ENCODE measurements at regions of chr16 and their contacts with region 1.

Region 1: DNA sequence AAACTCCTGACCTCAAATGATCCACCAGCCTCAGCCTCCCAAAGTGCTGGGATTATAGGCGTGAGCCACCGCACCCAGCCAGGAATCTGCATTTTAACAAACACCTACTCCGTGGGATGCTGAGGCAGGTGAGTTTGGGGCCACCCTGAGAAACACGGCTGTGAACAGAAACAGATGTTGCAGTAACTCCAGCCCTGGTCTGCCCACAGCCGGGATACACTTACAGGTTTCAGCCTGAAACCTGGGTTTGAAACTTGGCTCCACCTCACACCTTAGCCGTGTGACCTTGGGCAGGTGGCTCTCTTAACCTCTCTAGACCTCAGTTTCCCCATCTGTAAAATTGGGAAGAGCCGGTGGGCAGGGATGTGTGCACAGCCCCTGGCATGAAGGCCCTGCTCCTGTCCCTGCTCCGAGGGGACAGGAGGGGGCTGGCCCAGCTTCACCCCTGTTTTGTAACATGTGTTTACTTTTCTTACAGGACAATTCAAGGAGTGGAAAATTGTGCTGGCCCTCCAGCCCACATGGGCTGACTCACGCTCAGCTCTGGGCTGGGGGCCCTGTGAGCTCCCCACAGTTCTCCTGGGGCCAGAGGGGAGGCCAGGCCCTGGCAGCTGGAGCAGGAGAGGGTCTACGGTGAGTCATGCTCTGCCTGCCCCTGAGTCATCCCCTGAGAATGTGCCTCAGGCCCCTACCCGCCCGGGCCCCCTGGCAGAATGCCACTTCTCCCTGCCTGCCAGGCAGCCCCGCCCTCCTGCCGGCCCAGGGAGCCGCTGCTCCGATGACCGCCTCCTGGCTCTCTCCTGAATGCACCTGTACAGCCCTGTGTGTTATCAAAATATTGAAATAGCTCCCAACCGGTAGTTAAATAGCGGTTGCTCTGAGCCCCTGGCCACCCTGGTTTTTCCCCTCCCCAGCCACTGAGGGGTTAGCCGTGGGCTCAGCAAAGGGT is 7.7 kb upstream of the PPL start:
- DNase-seq: peak; percentile 97 to 98 (median 98)
- H3K4me3 ChIP-seq: no peak overlapping the region
- H3K27ac ChIP-seq: peak overlapping the region; percentile 67 to 82
- H3K4me1 ChIP-seq: peaks cover 29% of the 10 kb centered on the region
- H3K27me3 ChIP-seq: no peaks in the 10 kb centered on the region
- CTCF ChIP-seq: no peak
- EP300 ChIP-seq: peak; percentile 50
- POLR2A ChIP-seq: no peak

Region 2: DNA sequence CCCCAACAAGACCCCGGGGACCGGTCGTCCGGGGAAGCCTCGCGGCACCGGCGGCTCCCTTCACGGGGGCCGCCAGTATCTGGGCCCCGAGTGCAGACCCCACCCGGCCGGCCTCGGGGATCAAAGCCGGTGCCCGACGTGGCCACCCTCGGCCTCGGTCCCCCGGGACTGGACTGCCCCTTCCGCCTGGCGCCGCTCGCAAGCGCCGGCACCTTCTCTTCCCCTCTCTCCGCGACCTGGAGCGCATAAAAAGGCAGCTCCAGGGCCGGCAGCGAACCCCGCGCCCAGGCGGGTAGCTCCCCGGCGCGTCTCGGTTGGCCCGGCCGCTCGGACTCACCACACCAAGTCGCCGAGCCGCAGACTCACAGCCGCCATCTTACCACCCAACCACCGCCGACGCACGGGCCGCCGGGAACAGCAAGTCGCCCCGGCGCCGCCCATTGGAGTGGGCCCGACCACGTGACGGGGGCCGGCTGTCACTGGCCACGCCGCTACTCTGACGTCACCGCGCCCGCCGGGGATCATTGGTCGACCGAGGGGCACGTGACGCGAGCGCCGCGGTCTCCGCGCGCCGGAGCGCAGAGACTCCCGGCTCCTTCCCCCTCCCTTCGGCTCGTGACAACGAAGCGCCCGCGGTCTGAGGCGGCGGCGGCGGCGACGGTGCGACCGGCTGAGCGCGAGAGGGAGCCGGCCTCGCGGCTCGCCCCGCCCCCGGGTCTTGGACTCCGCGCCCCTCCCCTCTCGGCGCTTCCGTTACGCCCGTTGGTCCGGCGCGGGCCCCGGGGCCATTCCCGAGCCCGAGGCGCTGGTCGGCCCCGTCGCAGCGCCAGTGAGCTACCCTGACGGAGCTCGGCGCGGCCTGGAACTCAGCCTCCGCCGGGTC is 97.5 kb before region 1 on chr16 and contains the starts of genes GLYR1 and UBN1:
- intact Hi-C with region 1: loop called (anchors 5 to 10 kb)
- DNase-seq: peak; percentile 99 to 100 (median 99)
- H3K4me3 ChIP-seq: peak within 1 kb of the TSS; percentile 63
- H3K27ac ChIP-seq: peak within 1 kb of the TSS; percentile 93 to 96
- H3K4me1 ChIP-seq: peaks cover 8% of the 10 kb centered on the region
- H3K27me3 ChIP-seq: no peaks in the 10 kb centered on the region
- CTCF ChIP-seq: peak in 1 of 3 donors; percentile 3
- EP300 ChIP-seq: no peak
- POLR2A ChIP-seq: peak; percentile 80
- total RNA-seq, gene GLYR1: 30.3 to 79.5 (median 69.7) TPM
- total RNA-seq, gene UBN1: 16.1 to 41.3 (median 27.3) TPM

Region 3: DNA sequence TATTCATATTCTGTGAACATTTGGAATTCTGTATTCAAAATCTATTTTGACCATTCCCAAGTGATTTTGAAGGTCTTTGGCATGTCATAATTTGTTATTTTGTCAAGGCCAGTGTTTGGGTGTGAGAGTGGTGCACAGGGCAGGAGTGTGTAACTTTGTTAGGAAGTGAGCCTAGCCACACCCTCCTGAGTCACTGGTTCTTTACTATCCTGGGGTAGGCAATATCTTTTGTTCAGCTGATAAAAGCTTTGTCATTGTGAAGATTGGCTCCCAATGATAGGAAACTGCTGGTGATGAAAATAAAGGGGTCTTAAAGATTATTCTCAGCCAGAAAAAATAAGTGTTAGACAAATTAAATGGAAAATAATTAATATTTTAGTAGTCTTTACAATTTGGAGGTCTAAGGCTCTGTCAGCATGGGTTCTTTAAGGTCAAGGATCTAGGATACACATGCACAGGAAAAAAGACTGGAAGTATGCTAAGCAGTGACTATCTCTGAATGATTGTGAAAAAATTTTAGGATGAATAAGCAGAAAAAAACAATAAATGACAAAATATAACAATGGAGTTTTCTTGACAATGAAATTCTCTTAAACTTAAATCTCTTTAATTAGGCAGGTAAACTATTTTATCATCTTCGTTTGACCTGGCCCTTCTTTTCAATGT is 92.3 kb before region 1 on chr16:
- intact Hi-C with region 1: loop called (anchors 5 to 10 kb)
- DNase-seq: no peak
- H3K4me3 ChIP-seq: no peak overlapping the region
- H3K27ac ChIP-seq: no peak overlapping the region
- H3K4me1 ChIP-seq: peaks cover 8% of the 10 kb centered on the region
- H3K27me3 ChIP-seq: no peaks in the 10 kb centered on the region
- CTCF ChIP-seq: no peak
- EP300 ChIP-seq: no peak
- POLR2A ChIP-seq: no peak

Region 4: DNA sequence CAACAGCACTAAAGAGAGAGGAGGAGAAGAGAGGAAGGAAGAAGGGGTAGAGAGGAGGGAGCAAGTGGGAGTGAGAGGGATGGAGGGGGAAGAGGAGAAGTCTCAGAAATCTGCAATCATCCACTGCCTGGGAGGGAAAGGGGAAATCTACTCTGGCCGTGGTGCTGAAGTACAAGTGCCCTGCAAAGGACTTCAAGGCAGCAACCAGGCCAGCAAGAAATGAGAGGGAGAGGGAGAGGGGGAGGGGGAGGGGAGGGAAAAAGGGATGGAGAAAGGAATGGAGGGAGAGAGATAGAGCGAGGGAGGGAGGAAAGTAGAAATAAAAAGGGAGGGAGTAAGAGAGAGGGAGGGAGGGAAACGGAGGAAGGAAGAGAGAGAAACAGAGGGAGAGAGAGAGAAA is 283.8 kb after region 1 on chr16:
- intact Hi-C with region 1: no loop called
- DNase-seq: no peak
- H3K4me3 ChIP-seq: no peak overlapping the region
- H3K27ac ChIP-seq: no peak overlapping the region
- H3K4me1 ChIP-seq: no peaks in the 10 kb centered on the region
- H3K27me3 ChIP-seq: no peaks in the 10 kb centered on the region
- CTCF ChIP-seq: no peak
- EP300 ChIP-seq: no peak
- POLR2A ChIP-seq: no peak

Measured in ovary (tissue), 10 donors.